ENCODE measurements at regions of chr18 and their contacts with region 1.

Region 1: DNA sequence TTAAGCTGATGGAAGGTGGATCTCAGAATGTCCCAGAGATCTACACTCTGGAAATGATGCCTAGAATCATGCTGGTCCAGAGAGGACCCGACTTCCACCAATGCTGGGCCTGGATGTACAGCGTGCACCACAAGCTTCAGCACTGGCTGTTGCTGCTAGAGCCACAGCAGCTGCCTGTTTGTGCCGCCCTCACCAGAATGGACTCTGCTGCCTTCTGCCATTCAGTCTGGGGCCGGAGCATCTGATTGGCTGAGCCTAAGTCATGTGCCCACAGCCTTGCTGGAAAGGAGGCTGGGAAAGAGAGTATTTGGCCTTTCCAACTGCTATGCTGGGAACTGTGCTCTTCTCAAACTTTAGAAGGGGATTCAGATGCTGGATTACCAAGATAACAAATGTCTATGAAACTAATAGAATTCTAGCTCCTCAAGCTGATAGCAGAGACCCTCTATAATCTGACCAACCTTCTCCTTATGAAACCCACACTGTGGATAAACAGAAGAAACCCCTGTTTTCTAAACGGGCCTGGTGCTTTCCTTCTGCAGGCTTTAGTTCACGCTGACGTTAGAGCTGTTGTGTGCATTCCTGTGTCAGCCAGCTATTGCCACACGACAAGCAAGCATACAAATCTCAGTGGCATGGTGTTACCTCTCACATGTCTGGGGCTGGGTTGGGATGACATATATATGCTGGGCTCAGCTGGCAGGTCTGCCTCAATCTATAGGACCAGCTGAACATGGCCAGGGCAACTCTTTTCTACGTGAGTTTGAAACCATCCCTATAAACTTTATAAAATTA is 4.1 kb upstream of the LOXHD1 start:
- DNase-seq: peak in 1 of 2 experiments; percentile 8
- ATAC-seq: no peak; a peak in 1 of 6 replicates
- H3K4me3 ChIP-seq: no peak overlapping the region
- H3K27ac ChIP-seq: no peak overlapping the region
- H3K4me1 ChIP-seq: no peaks in the 10 kb centered on the region
- CTCF ChIP-seq: no peak
- EP300 ChIP-seq: no peak
- POLR2A ChIP-seq: no peak
- RAD21 ChIP-seq: no peak

Region 2: GRCh38 chr18:46148810-46149209 is 512.3 kb before region 1 on chr18:
- CTCF ChIA-PET with region 1: interaction called, 26 read pairs
- POLR2A ChIA-PET with region 1: no interaction called
- DNase-seq: peak; percentile 31 to 66
- ATAC-seq: peak; percentile 60 to 72; a peak in 4 of 6 replicates
- H3K4me3 ChIP-seq: no peak overlapping the region
- H3K27ac ChIP-seq: peak overlapping the region in 1 of 2 experiments; percentile 63; a peak in 1 of 6 replicates
- H3K4me1 ChIP-seq: peaks cover 23% of the 10 kb centered on the region
- CTCF ChIP-seq: peak; percentile 60
- EP300 ChIP-seq: no peak
- POLR2A ChIP-seq: no peak
- RAD21 ChIP-seq: peak; percentile 75 to 78

Region 3: GRCh38 chr18:46324087-46324958 is 336.8 kb before region 1 on chr18:
- CTCF ChIA-PET with region 1: no interaction called
- POLR2A ChIA-PET with region 1: no interaction called
- DNase-seq: peak; percentile 43 to 49
- ATAC-seq: peak; percentile 72 to 90; a peak in 4 of 6 replicates
- H3K4me3 ChIP-seq: no peak overlapping the region
- H3K27ac ChIP-seq: peak overlapping the region; percentile 44 to 46; a peak in 2 of 6 replicates
- H3K4me1 ChIP-seq: peaks cover 27% of the 10 kb centered on the region
- CTCF ChIP-seq: no peak
- EP300 ChIP-seq: no peak
- POLR2A ChIP-seq: no peak
- RAD21 ChIP-seq: no peak

Region 4: DNA sequence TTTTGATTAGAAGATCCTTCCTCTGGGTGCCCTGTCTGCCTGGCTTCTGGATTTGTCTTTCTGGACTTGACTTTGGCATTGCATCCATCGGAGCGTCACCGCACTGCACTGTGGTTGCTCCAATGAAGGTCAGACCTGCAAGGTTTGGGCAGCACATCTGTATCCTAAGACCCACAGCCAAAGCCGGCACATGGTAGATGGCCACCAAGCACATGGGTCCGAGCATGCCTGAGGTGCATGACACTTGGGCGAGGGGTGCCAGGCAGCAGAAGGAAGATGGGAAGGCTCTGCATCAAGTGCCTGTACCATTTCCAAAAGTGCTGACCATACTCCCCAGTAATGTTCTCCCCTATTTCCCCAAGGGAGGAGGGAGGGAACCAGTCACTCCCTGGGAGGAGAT is 154.2 kb before region 1 on chr18:
- CTCF ChIA-PET with region 1: no interaction called
- POLR2A ChIA-PET with region 1: no interaction called
- DNase-seq: no peak
- ATAC-seq: no peak
- H3K4me3 ChIP-seq: no peak overlapping the region
- H3K27ac ChIP-seq: no peak overlapping the region
- H3K4me1 ChIP-seq: no peaks in the 10 kb centered on the region
- CTCF ChIP-seq: no peak
- EP300 ChIP-seq: no peak
- POLR2A ChIP-seq: no peak
- RAD21 ChIP-seq: no peak

Region 5: DNA sequence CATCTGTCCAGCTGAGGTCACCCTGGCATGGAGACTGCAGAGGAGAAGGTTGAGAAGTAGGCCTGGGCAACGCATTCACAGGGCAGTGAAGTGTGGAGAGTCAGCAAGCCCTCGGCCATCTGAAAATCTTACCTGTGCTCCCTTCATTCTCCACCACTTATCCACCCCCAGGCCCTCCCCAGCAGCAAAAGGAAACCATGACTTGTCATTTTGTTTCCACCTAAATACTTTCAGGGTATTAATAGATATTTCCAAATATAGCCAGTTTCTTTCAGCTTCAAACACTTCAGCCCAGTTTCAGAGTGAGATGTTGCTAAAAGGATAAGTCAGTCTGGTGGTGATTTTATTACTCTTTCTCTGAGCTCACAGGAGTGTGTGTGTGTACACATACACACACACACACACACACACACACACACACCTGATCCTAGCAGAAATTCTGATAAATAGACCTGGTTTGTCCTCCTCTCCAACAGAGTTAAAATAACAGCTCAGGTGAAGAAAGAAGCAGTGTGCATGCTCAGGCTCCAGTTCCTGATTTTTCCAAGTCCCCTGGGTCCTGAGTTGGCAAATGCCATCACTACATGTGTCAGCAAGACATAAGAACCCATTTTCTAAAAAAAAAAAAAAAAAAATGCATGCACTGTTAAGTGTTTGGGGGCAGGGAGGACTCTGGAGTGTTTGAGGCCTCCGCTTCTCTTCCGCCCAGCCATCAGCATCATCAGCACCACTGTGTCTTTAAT is 87.0 kb before region 1 on chr18:
- CTCF ChIA-PET with region 1: no interaction called
- POLR2A ChIA-PET with region 1: no interaction called
- DNase-seq: no peak
- ATAC-seq: no peak
- H3K4me3 ChIP-seq: no peak overlapping the region
- H3K27ac ChIP-seq: no peak overlapping the region
- H3K4me1 ChIP-seq: no peaks in the 10 kb centered on the region
- CTCF ChIP-seq: no peak
- EP300 ChIP-seq: no peak
- POLR2A ChIP-seq: no peak
- RAD21 ChIP-seq: no peak

Region 6: GRCh38 chr18:46596119-46596518 is 65.0 kb before region 1 on chr18:
- CTCF ChIA-PET with region 1: no interaction called
- POLR2A ChIA-PET with region 1: no interaction called
- DNase-seq: no peak
- ATAC-seq: no peak
- H3K4me3 ChIP-seq: no peak overlapping the region
- H3K27ac ChIP-seq: no peak overlapping the region
- H3K4me1 ChIP-seq: no peaks in the 10 kb centered on the region
- CTCF ChIP-seq: no peak
- EP300 ChIP-seq: no peak
- POLR2A ChIP-seq: no peak
- RAD21 ChIP-seq: no peak

Region 7: DNA sequence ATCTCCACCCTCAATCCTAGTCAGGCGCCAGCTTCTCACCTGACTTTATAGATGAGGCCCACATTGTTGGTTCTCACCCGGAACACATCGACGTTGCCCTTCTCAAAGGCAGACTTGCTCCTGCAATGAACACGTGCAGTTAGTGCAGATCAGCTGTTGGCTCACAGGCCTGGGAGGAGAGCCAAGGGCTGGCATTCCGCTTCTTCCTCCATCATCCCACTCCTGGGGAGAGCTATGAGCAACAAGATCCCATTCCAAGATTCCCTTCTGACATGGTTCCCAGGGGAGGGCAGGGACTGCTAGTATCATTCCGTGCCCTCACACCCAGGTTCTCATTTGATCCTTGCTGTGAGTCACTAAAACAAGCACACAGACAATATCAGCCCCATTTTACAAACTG is 19.2 kb before region 1 on chr18:
- CTCF ChIA-PET with region 1: interaction called, 37 read pairs
- POLR2A ChIA-PET with region 1: no interaction called
- DNase-seq: no peak
- ATAC-seq: no peak
- H3K4me3 ChIP-seq: no peak overlapping the region
- H3K27ac ChIP-seq: no peak overlapping the region
- H3K4me1 ChIP-seq: no peaks in the 10 kb centered on the region
- CTCF ChIP-seq: no peak
- EP300 ChIP-seq: no peak
- POLR2A ChIP-seq: no peak
- RAD21 ChIP-seq: no peak

Region 8: DNA sequence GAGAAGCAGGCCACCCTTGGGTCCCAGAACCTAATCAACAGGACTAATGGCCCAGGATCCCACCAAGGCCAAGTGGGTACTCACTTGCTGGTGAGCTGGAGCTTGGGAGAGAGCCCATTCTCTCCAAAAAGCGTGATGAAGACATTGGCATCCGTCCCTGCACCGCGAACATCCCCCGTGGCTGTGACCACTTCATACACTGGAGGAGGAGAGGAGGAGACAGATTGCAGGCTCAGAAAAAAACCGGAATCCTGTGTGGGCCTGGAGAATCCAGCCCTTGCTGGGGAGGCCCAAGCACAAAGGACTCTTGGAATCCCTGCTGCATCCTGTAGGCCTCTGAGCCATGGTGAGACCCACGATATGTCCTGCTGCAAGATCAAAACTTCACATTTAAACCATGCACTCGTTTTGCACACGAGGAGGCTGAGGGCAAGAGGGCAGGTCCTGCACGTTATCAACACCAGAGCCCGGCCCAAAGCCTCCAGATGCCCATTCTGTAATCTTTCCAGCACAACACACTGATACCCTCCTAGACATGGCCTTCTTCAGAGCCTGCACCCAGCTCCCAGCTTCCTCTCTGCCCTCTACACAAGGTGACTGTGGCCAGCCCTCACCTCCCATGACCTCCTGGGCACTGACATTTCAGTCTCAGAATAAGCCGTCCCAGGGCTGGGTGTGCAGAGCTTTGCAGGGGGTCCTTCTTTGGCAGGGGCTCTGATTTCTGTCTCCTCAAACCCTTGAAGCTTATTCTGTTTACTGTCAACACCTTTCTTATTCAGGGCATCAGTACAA is 11.9 kb before region 1 on chr18:
- CTCF ChIA-PET with region 1: interaction called, 37 read pairs
- POLR2A ChIA-PET with region 1: no interaction called
- DNase-seq: no peak
- ATAC-seq: no peak
- H3K4me3 ChIP-seq: no peak overlapping the region
- H3K27ac ChIP-seq: no peak overlapping the region
- H3K4me1 ChIP-seq: no peaks in the 10 kb centered on the region
- CTCF ChIP-seq: no peak
- EP300 ChIP-seq: no peak
- POLR2A ChIP-seq: no peak
- RAD21 ChIP-seq: no peak

Region 9: GRCh38 chr18:46672062-46672970 is 11.2 kb after region 1 on chr18:
- CTCF ChIA-PET with region 1: interaction called, 17 read pairs
- POLR2A ChIA-PET with region 1: no interaction called
- DNase-seq: no peak
- ATAC-seq: no peak
- H3K4me3 ChIP-seq: no peak overlapping the region
- H3K27ac ChIP-seq: no peak overlapping the region
- H3K4me1 ChIP-seq: no peaks in the 10 kb centered on the region
- CTCF ChIP-seq: no peak
- EP300 ChIP-seq: no peak
- POLR2A ChIP-seq: no peak
- RAD21 ChIP-seq: no peak

Measured in A549 (cell line).